H1 (cell line): ENCODE measurements at regions of chr15 and their contacts with region 1.

Region 1: GRCh38 chr15:101320501-101321052 is 25.5 kb upstream of the SNRPA1 start:
- DNase-seq: peak in 1 of 2 experiments; percentile 71
- H3K4me3 ChIP-seq: no peak overlapping the region
- H3K27ac ChIP-seq: no peak overlapping the region
- H3K4me1 ChIP-seq: peaks cover 0 to 3% (median 0%) of the 10 kb centered on the region in 4 experiments; a peak in 1 of 7 replicates
- H3K27me3 ChIP-seq: no peaks in the 10 kb centered on the region; a peak in 1 of 7 replicates
- CTCF ChIP-seq: peak; percentile 67 to 81 (median 79)
- EP300 ChIP-seq: no peak
- POLR2A ChIP-seq: no peak
- RAD21 ChIP-seq: peak; percentile 46 to 64

Region 2: GRCh38 chr15:101294731-101295606 is 25.6 kb before region 1 on chr15 and contains the start of gene SNRPA1:
- CTCF ChIA-PET with region 1: interaction called, 10 read pairs
- POLR2A ChIA-PET with region 1: interaction called, 3 read pairs
- DNase-seq: peak; percentile 66 to 96
- H3K4me3 ChIP-seq: peak within 1 kb of the TSS; percentile 93 to 98 (median 94)
- H3K27ac ChIP-seq: peak within 1 kb of the TSS; percentile 46
- H3K4me1 ChIP-seq: peaks cover 3 to 5% (median 4%) of the 10 kb centered on the region in 4 experiments; a peak in 4 of 7 replicates
- H3K27me3 ChIP-seq: no peaks in the 10 kb centered on the region
- CTCF ChIP-seq: no peak
- EP300 ChIP-seq: no peak
- POLR2A ChIP-seq: peak in 1 of 2 experiments; percentile 82; a peak in 2 of 3 replicates
- RAD21 ChIP-seq: no peak
- total RNA-seq, gene SNRPA1: 214 and 221 TPM in 2 replicates

Region 3: GRCh38 chr15:101333401-101333800 is 12.8 kb after region 1 on chr15:
- CTCF ChIA-PET with region 1: interaction called, 32 read pairs
- POLR2A ChIA-PET with region 1: interaction called, 5 read pairs
- DNase-seq: no peak
- H3K4me3 ChIP-seq: no peak overlapping the region
- H3K27ac ChIP-seq: no peak overlapping the region
- H3K4me1 ChIP-seq: no peaks in the 10 kb centered on the region; a peak in 1 of 7 replicates
- H3K27me3 ChIP-seq: peaks cover 0 to 19% (median 6%) of the 10 kb centered on the region in 4 experiments; a peak in 4 of 7 replicates
- CTCF ChIP-seq: peak in 1 of 3 experiments; percentile 14; a peak in 1 of 4 replicates
- EP300 ChIP-seq: no peak
- POLR2A ChIP-seq: no peak
- RAD21 ChIP-seq: no peak

Region 4: GRCh38 chr15:101501703-101502373 is 181.3 kb after region 1 on chr15:
- CTCF ChIA-PET with region 1: interaction called, 31 read pairs
- POLR2A ChIA-PET with region 1: no interaction called
- DNase-seq: peak; percentile 36 to 81
- H3K4me3 ChIP-seq: no peak overlapping the region
- H3K27ac ChIP-seq: no peak overlapping the region
- H3K4me1 ChIP-seq: peaks cover 0 to 10% (median 2%) of the 10 kb centered on the region in 4 experiments; a peak in 5 of 7 replicates
- H3K27me3 ChIP-seq: 0 out of 7 replicates have a peak, but pooled peaks cover 0 to 3% (median 0%) of the 10 kb centered on the region in 4 experiments
- CTCF ChIP-seq: peak; percentile 61 to 77 (median 70)
- EP300 ChIP-seq: no peak
- POLR2A ChIP-seq: no peak
- RAD21 ChIP-seq: peak; percentile 61 to 68